ENCODE measurements at regions of chr20 and their contacts with region 1.

Region 1: DNA sequence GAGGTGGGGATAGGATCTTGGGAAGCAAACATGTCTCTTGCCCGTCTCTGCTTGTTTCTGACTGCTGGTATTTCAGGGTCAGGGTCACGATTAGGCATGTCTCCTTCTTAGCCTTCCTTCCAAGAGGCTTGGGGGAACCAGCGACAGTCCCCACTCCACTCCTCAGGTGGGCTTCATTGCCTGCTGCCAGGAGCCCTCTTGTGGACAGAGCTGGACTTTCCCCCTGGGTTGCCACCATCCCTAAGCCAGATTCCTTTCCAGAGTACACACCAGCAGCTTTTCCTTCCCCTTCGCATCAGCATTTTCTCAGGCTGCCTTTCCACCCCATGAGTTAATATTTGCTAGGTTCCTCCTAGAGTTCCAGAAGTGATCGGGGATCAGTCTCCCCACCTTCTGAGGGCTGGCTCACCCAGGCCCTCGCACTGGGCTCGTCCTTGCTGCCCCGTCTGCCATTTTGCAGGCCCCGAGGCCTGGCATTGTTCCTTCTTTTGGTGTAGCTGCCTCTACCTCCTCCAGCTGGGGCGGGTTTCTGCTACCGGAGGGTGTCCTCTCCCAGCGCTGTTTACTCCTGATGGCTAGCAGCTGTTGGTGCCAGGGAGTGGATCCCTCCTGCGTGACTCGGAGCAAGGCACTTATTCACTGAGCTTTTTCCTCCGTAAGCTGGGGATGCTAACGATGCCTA is 8.8 kb upstream of the C20orf144 start:
- DNase-seq: no peak
- ATAC-seq: peak; percentile 88
- H3K4me3 Mint-ChIP-seq: no peak overlapping the region
- H3K27ac Mint-ChIP-seq: peak overlapping the region; percentile 18
- H3K4me1 Mint-ChIP-seq: peaks cover 11% of the 10 kb centered on the region
- H3K27me3 Mint-ChIP-seq: no peaks in the 10 kb centered on the region
- CTCF ChIP-seq: no peak

Region 2: GRCh38 chr20:33460711-33461110 is 192.6 kb before region 1 on chr20:
- CTCF ChIA-PET with region 1: interaction called, 9 read pairs
- POLR2A ChIA-PET with region 1: interaction called, 4 read pairs
- intact Hi-C with region 1: loop called (anchors 1 kb)
- DNase-seq: no peak
- ATAC-seq: no peak
- H3K4me3 Mint-ChIP-seq: no peak overlapping the region
- H3K27ac Mint-ChIP-seq: no peak overlapping the region
- H3K4me1 Mint-ChIP-seq: peaks cover 18% of the 10 kb centered on the region
- H3K27me3 Mint-ChIP-seq: no peaks in the 10 kb centered on the region
- CTCF ChIP-seq: no peak

Measured in activated B cell treated with CpG ODN at 0.5 μM for 24 hours (primary cell).